ENCODE measurements at regions of chr2 and their contacts with region 1.

Region 1: DNA sequence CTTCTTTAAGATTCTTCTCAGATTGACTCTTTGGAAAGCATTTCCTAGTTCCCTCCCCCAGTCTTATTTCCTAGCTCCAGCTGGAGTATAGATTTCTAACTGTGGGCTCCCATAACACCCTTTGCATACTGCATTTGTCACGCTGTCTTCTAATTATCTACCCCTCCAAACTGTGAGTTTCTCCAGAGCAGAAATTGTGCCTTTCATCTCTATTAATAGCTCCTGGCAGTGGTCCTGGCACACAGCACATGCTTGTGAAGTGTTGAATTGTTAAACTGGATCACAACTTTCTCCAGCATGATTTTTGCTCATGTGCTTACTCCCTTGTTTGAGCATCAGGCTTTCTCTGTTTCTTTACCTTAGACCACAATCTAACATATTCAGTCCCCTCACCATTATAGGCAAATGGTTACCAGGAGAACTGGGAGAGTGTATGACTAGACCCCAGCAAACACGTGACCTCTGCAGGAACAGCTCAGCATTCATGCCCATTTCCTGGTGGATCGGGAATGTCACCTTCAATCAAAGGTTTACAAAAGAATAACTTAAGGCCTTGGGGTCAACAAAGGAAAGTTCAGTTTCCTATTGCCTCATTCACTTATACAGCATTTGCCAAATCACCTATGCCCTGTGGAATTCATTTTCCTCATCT is 175.7 kb upstream of the TANK start:
- DNase-seq: no peak
- H3K4me3 ChIP-seq: no peak overlapping the region
- H3K27ac ChIP-seq: peak overlapping the region; percentile 11 to 43 (median 18)
- H3K4me1 ChIP-seq: peaks cover 0 to 3% (median 0%) of the 10 kb centered on the region in 4 donors
- H3K27me3 ChIP-seq: no peaks in the 10 kb centered on the region
- CTCF ChIP-seq: no peak
- EP300 ChIP-seq: no peak
- POLR2A ChIP-seq: no peak

Region 2: GRCh38 chr2:160252278-160252887 is 732.2 kb before region 1 on chr2:
- in situ Hi-C with region 1: loop called in 2 of 4 experiments (anchors 25 kb)
- intact Hi-C with region 1: loop called (anchors 10 kb)
- DNase-seq: no peak
- H3K4me3 ChIP-seq: no peak overlapping the region
- H3K27ac ChIP-seq: no peak overlapping the region
- H3K4me1 ChIP-seq: peaks cover 0 to 20% (median 1%) of the 10 kb centered on the region in 4 donors
- H3K27me3 ChIP-seq: no peaks in the 10 kb centered on the region
- CTCF ChIP-seq: peak; percentile 71 to 86 (median 82)
- EP300 ChIP-seq: no peak
- POLR2A ChIP-seq: no peak

Region 3: GRCh38 chr2:161384864-161385263 is 400.3 kb after region 1 on chr2:
- in situ Hi-C with region 1: no loop called
- intact Hi-C with region 1: no loop called
- DNase-seq: no peak
- H3K4me3 ChIP-seq: no peak overlapping the region
- H3K27ac ChIP-seq: no peak overlapping the region
- H3K4me1 ChIP-seq: no peaks in the 10 kb centered on the region
- H3K27me3 ChIP-seq: no peaks in the 10 kb centered on the region
- CTCF ChIP-seq: no peak
- EP300 ChIP-seq: no peak
- POLR2A ChIP-seq: no peak